ENCODE measurements at regions of chr11 and their contacts with region 1.

Region 1: GRCh38 chr11:124953753-124954589 is at the start of gene CCDC15:
- ATAC-seq: peak; percentile 97 to 99 (median 98)
- H3K4me3 ChIP-seq: peak within 1 kb of the TSS; percentile 44 to 84 (median 64)
- H3K27ac ChIP-seq: peak within 1 kb of the TSS; percentile 80 to 88
- H3K4me1 ChIP-seq: peaks cover 8 to 9% of the 10 kb centered on the region in 2 donors
- total RNA-seq, gene CCDC15: 0.87 to 4.7 (median 2.5) TPM

Region 2: DNA sequence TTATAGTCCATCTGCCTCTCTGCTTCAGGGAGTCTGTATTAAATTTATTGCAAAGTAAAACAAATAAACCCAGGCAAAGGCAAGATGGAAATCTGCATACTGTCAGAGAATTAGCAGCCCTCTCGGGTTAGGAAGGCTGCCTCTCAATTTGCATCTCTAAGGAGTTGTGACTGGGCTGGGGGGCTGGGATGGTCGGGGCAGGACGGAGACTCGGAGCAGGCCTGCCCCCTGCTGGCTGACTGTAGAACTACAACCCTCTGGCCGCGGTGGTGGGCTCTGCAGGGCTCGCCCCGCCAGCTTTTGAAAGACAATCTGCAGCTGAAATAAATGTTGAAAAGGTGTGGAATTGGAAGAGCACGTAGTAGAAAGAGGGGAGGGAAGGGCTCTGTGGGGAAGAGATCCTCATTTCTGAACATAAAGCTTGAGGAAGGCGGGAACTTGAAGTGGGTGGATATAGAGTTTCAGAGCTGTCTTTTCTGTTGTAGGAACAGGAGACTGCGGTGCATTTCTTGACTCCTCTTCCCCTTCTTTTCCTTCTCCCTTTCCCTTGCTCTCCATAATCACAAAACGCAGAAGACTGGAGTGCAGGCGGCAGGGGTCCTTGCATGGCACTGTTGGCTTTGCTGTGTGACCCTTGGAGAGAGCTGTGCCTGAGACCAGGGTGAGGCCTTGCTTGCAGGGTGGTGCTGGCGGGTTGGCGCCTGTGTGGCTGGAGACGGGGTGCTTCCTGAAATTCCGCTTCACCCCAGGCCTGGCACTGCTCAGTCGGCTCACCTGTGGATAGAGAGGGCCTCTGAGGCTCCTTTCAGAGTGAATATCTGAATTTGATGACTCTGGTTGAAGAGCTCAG is 187.9 kb after region 1 on chr11:
- in situ Hi-C with region 1: loop called in 1 of 9 experiments (anchors 25 kb)
- ATAC-seq: peak; percentile 80 to 99 (median 86)
- H3K4me3 ChIP-seq: no peak overlapping the region
- H3K27ac ChIP-seq: no peak overlapping the region
- H3K4me1 ChIP-seq: peaks cover 54 to 56% of the 10 kb centered on the region in 2 donors

Region 3: GRCh38 chr11:125345421-125346178 is 391.6 kb after region 1 on chr11:
- in situ Hi-C with region 1: loop called in 1 of 9 experiments (anchors 25 kb)
- ATAC-seq: peak; percentile 66 to 86 (median 70)
- H3K4me3 ChIP-seq: no peak overlapping the region
- H3K27ac ChIP-seq: peak overlapping the region in 1 of 2 donors; percentile 54
- H3K4me1 ChIP-seq: peaks cover 85 to 91% of the 10 kb centered on the region in 2 donors

Region 4: DNA sequence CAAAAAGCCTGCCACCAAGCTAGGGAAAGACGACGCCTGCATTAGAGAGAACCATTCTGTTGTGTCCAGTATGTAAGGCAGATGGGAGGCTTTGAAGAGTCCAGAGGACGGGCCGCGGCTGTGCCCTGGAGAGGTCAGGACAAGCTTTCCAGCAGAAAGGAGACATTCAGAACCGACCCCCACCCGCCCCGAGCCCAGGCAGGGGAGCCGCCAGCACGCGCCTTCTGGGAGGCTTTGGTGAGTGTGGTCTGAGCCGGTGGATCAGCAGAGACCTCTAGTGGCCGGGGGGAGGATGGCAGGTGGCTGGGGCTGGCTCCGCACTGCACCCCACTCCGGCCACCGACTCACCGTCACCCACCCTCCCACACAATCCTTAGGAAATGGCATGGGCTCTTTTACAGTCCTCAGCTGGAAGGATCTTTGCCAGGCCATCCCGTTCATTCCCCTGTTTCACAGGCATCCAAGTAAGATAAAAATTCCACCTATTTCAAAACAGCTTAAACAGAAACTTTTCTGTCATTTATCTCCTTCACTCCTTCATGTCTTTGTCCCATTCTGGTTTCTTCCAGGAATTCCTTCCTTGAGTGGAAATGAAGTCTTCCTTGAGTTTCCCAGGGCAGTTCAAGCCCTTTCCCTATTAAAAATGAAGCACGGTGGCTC is 450.9 kb after region 1 on chr11:
- in situ Hi-C with region 1: loop called in 1 of 9 experiments (anchors 25 kb)
- ATAC-seq: peak; percentile 81 to 98 (median 82)
- H3K4me3 ChIP-seq: no peak overlapping the region
- H3K27ac ChIP-seq: peak overlapping the region in 1 of 2 donors; percentile 30
- H3K4me1 ChIP-seq: peaks cover 36 to 44% of the 10 kb centered on the region in 2 donors